ENCODE measurements at regions of chr17 and their contacts with region 1.

Region 1: GRCh38 chr17:41648411-41649195 is 24.2 kb upstream of the KRT17 start:
- DNase-seq: peak; percentile 90
- ATAC-seq: peak; percentile 96

Region 2: GRCh38 chr17:41548844-41549595 is 99.6 kb before region 1 on chr17:
- intact Hi-C with region 1: loop called (anchors 10 kb)
- DNase-seq: peak; percentile 89
- ATAC-seq: peak; percentile 93